ENCODE measurements at regions of chr10 and their contacts with region 1.

Region 1: DNA sequence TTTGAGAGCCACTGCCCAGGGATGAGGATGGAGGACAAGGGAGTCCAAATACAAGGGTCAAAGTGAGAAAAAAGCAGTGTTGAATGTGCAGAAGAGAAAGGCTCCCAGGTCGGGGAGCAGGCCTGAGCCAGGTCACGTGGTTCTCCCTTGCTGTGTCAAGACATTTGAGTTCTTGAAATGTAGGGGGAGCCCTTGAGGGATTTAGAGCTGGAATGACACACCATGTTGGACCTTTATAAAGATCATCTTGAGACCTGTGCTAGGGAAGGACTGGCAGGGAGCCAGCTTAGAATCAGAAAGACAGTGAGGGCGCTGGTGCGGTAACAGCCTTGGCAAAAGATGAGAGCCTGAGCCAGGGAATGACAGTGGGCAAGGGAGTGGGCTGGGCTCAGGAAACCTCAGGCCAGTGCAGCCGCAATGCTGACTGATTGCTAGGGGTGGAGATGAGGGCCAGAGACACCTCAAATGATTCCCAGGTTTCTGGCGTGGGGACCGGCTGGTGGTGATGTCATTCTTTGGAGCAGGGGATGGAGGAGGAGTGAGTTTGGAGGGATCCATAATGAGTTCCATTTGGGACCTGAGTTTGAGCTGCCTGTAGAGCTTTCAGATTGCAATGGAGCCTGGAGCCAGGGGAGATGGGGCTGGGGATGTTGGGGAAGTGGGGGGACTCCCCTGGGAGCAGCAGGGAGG is 120.1 kb downstream of the PTPN20 start:
- DNase-seq: peak in 3 of 6 donors; percentile 3 to 33 (median 9)
- ATAC-seq: no peak
- H3K4me3 ChIP-seq: no peak overlapping the region
- H3K27ac ChIP-seq: no peak overlapping the region
- H3K4me1 ChIP-seq: no peaks in the 10 kb centered on the region
- H3K27me3 ChIP-seq: no peaks in the 10 kb centered on the region
- CTCF ChIP-seq: no peak

Region 2: DNA sequence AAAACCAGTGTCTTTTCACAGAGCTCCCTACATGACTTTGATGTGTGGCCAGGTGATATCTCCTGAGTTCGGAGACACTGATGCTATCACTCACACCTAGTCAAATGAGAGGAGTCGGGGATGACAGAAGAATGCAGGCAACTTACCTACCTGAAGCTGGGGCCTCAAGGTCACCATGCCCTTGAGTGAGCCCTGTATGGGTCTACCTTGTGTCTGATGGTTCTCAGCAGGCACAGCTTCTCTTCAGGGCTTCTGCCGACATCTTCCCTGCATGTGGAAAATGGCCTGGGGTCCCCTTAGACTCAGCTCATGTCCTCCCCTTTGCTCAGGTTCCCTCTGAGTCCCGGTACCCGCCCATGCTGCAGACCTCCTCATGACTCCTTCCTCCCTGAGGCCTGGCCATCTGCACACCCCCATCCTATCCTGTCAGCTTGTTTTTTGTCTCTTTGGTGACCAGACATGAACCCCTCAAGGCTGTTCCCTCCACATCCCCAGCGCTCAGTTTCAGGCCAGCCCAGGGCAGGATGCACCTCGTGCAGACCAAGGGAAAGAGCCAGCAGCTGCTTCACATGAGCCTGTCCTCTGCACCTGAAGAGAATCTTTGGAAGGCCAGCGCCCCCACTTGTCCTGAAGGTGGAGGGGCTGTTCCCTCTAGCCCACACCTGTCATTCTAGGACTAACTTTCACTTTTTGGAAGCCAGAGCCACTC is 194.0 kb after region 1 on chr10:
- intact Hi-C with region 1: no loop called
- DNase-seq: no peak
- ATAC-seq: no peak
- H3K4me3 ChIP-seq: no peak overlapping the region
- H3K27ac ChIP-seq: no peak overlapping the region
- H3K4me1 ChIP-seq: no peaks in the 10 kb centered on the region
- H3K27me3 ChIP-seq: no peaks in the 10 kb centered on the region
- CTCF ChIP-seq: no peak

Region 3: DNA sequence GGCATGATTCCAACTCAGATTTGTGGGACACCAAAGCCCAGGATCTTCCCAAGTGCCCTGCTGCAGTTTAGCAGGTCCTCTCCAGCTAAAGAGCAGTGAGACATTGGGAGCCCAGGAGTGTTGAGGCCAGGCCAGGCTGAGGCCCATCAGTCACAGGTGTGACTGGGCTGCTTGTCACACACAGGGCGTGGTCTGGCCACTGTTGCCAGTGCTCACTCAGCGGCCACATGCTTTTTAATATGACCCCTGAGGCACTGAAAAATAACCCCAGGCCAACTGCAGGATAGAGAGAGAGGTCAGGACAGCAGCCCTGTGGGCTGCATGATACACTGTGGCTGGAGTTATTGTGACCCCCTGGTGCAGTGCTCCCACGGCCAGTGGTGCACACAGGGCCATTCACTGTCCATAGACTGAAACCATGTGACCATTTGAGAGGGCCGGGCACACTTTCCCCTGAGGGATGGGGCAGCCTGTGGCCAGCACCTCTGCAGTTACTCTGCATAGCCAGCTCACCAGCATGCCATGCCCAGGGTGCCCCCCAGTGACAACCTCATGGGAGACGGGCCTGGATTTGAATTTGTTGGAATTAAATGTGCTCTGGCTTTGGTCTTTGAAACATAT is 295.1 kb after region 1 on chr10:
- intact Hi-C with region 1: loop called in 1 of 3 experiments (anchors 10 kb)
- DNase-seq: no peak
- ATAC-seq: peak in 1 of 4 donors; percentile 38
- H3K4me3 ChIP-seq: no peak overlapping the region
- H3K27ac ChIP-seq: no peak overlapping the region
- H3K4me1 ChIP-seq: no peaks in the 10 kb centered on the region
- H3K27me3 ChIP-seq: no peaks in the 10 kb centered on the region
- CTCF ChIP-seq: no peak

Measured in pancreas (tissue), 10 donors.